ENCODE measurements at regions of chr17 and their contacts with region 1.

Region 1: DNA sequence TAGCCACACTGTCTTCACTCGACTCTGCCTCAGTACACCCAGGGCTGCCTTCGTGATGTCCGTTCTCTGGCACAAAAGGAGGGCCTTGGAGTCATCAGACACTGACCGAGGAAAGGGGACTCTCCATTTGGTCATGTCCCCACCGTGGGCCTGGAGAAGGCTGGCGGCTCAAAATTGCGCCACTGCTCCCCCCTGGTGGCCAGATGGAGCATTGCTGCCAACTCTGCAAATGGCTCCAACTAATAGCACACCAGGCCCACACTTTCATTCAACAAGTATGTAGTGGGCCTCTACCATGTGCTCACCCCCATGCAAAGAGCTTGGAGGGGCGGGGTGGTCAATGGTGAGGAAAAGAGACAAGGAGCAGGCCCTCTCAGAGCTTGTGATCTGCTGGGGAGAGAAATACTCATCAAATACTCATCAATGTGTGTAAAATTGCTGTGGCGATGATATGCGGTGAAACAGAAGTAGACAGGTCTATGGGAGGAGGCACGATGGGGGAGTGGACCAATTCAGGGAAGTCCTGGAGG is 5.2 kb upstream of the GRIN2C start:
- DNase-seq: peak; percentile 87
- ATAC-seq: peak; percentile 63
- H3K4me3 Mint-ChIP-seq: no peak overlapping the region
- H3K27ac Mint-ChIP-seq: peak overlapping the region; percentile 16
- H3K4me1 Mint-ChIP-seq: peaks cover 14% of the 10 kb centered on the region
- H3K27me3 Mint-ChIP-seq: peaks cover 27% of the 10 kb centered on the region
- CTCF ChIP-seq: peak; percentile 97

Region 2: GRCh38 chr17:74759243-74759801 is 105.6 kb before region 1 on chr17:
- CTCF ChIA-PET with region 1: interaction called, 14 read pairs
- POLR2A ChIA-PET with region 1: interaction called, 3 read pairs
- DNase-seq: no peak
- ATAC-seq: no peak
- H3K4me3 Mint-ChIP-seq: no peak overlapping the region
- H3K27ac Mint-ChIP-seq: peak overlapping the region; percentile 89
- H3K4me1 Mint-ChIP-seq: peaks cover 52% of the 10 kb centered on the region
- H3K27me3 Mint-ChIP-seq: no peaks in the 10 kb centered on the region
- CTCF ChIP-seq: no peak

Region 3: DNA sequence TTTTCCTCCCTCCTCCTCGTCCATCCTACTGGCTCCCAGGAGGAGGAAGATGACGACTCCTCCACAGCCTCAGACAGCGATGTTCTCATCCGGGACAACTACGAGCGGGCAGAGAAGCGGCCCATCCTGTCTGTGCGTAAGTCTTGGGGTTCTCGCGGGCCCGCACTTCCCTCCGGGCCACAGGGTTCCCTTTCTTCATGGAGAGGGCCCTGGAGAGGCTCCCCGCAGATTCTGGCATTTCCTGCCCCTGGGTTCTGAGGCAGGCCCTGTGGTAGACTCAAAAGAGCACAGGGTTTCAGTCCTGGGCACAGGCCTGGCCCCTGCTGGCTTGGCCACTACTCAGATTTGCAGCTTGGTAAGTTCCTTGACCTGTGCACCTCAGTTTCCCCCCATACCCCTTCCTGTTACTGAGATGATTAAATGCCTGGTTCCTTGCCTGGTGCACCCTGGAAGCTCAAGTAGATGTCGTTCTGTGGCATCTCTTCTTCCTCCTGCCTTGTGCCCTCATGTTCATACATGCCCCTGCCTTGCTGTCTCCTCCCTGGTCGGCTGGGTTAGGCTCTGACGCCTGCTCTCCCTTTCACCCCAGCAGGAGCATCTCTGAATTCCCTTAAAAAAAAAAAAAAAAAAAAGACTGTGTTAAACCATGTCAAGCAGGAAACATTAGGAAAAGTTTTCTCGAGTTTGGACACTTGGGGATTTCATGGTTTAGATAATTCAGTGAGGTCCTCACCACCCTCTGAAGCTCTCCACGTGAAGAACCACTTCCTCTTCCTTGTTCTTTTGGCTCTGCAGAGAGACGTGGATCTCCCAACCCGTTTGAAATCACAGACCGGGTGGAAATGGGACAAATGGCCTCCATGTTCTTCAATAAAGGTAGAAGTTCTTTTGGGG is 74.5 kb before region 1 on chr17:
- CTCF ChIA-PET with region 1: interaction called, 36 read pairs
- POLR2A ChIA-PET with region 1: no interaction called
- DNase-seq: no peak
- ATAC-seq: no peak
- H3K4me3 Mint-ChIP-seq: no peak overlapping the region
- H3K27ac Mint-ChIP-seq: peak overlapping the region; percentile 80; the same call in 1 of the 2 replicates
- H3K4me1 Mint-ChIP-seq: peaks cover 6% of the 10 kb centered on the region
- H3K27me3 Mint-ChIP-seq: no peaks in the 10 kb centered on the region
- CTCF ChIP-seq: no peak

Region 4: DNA sequence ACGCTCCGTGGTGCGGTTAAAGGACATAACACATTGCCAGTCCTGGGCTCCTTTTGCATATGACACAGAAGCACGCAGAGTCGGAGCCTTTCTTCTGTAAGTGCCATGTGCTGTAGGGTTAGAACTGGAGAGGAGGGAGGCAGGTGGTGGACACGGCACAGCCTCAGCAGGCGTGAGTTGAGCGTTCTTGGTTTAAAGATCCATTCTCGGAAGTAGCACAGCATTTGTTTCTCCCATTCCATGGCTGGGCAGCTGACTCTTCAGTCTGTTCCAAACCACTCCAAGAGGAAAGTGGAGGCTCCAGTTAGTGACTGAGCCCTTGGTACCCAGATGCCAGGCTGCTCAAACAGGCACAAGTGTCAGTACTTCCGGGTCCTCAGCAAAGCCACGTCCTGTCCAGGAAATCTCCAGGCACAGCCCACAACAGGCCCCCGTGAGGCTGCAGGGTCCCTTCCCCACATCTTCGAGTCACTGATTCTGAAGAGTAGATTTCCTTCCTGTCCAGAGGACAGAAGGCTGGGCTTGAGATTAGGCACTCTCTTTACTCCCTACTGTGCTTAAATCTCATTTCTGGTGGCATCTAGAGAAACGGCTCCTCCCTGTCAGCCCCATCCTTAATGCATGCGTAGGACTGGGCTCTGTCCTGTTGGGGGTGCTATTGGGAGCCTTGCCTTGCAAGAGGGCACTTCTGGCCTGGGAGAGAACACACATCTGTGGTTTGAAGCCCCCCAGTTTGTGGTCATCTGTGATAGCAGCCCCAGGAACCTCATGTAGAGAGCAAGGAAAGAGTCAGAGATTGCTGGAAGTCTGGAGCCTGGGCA is 49.2 kb before region 1 on chr17:
- CTCF ChIA-PET with region 1: interaction called, 18 read pairs
- POLR2A ChIA-PET with region 1: no interaction called
- DNase-seq: peak; percentile 72
- ATAC-seq: peak; percentile 88
- H3K4me3 Mint-ChIP-seq: no peak overlapping the region
- H3K27ac Mint-ChIP-seq: no peak overlapping the region
- H3K4me1 Mint-ChIP-seq: peaks cover 8% of the 10 kb centered on the region
- H3K27me3 Mint-ChIP-seq: peaks cover 2% of the 10 kb centered on the region; the same call in 1 of the 2 replicates
- CTCF ChIP-seq: peak; percentile 36; the same call in 1 of the 2 replicates

Region 5: DNA sequence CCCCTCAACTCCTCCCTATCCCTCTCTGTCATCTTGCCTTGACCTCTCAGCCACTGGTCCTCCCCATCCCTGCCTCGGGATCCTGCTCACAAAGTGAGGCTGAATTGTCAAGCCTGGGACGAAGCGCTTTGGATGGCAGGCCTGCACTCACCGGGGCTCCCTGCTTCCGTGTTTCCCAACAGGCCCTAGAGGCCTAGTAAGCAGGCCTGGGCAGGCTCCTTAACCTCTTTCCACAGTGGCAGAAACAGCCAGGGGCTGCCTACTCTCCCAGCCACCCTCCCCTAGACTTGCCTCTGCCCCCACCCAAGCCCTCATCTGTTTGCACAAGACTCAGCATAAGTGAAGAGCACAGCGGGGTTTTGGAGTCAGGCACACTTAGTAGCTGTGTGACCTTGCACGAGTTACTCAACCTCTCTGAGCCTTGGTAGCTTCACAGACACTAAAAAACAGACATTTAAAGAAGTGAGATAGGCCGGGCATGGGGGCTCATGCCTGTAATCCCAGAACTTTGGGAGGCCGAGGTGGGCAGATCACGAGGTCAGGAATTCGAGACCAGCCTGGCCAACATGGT is 33.5 kb after region 1 on chr17:
- CTCF ChIA-PET with region 1: interaction called, 15 read pairs
- POLR2A ChIA-PET with region 1: no interaction called
- DNase-seq: no peak
- ATAC-seq: no peak
- H3K4me3 Mint-ChIP-seq: no peak overlapping the region
- H3K27ac Mint-ChIP-seq: no peak overlapping the region
- H3K4me1 Mint-ChIP-seq: peaks cover 6% of the 10 kb centered on the region; the same call in 1 of the 2 replicates
- H3K27me3 Mint-ChIP-seq: peaks cover 44% of the 10 kb centered on the region
- CTCF ChIP-seq: no peak

Measured in WTC11 (cell line).